PC-9 (cell line): ENCODE measurements at regions of chr2 and their contacts with region 1.

Region 1: DNA sequence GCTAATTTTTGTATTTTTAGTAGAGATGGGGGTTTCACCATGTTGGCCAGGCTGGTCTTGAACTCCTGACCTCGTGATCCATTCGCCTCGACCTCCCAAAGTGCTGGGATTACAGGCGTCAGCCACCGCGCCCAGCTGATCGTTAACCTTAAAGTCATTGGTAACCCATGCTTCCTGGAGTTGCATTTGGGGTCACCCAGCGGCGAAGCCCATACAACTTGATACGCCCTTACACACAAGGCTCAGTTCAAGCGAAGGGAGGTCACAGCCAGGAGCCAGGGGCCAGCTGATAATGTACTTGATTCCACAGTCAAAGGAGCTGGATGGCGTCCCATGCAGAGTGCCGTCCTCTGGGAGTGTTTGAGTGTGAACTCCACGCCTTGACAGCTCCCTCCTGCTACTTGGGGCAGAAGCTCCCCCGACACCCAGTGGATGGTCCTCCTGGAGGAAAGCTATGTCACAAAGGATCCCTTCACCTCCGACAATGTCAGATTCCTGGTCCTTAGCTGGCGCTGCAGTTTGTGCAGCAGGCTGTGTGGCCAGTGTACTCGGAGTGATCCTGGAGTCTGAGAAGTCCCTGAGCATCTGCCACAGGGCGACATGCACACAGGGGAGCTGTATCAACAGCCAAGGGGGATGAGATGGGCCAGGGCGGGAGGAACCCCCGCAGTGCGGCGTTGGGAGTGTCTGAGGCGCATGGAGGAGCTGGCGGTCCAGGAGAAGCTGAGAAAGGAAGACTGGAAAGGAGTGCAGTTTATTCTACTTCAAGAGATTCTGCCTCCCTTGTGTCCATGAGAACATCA is 7.9 kb downstream of the CLHC1 start:
- DNase-seq: no peak
- H3K4me3 ChIP-seq: peak overlapping the region; percentile 53; the same call in 1 of the 2 replicates
- H3K27ac ChIP-seq: no peak overlapping the region
- H3K4me1 ChIP-seq: 0 out of 2 replicates have a peak, but pooled peaks cover 5% of the 10 kb centered on the region
- H3K27me3 ChIP-seq: no peaks in the 10 kb centered on the region
- CTCF ChIP-seq: no peak

Region 2: DNA sequence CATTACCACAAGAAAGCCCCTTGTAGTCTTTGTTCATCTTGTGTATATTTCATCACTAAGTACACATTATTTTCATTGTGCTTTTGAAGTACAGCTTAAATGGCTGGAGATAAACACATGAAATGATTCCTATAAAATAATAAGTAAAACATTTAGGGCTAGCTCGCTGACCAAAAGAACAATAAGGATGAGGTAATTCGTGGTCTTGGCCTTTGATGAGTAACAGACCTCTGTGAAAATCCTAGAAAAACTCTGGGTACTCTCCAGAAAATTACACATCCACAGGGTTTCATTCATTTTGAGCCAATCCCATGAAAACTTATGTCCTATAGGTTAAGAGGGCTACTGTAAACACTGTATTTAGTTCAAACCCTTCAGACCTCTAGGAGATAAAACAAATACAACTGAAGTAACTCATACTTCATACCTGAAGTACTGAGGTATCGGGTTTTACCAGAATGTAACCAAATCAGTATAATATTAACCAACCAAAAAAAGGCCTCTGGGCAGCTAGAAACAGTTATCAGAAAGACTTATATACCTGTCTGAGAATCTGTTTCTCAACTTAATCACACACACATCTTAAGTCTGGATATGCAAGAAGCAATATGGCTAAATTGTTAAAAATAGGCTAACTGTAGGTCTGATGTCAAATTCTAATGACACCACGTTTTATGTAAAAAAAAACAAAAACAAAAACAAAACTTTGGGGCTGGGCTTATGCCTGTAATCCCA is 326.4 kb after region 1 on chr2:
- CTCF ChIA-PET with region 1: interaction called, 19 read pairs
- POLR2A ChIA-PET with region 1: no interaction called
- intact Hi-C with region 1: no loop called
- DNase-seq: peak in 1 of 2 experiments; percentile 33
- H3K4me3 ChIP-seq: no peak overlapping the region
- H3K27ac ChIP-seq: no peak overlapping the region
- H3K4me1 ChIP-seq: peaks cover 3% of the 10 kb centered on the region
- H3K27me3 ChIP-seq: no peaks in the 10 kb centered on the region
- CTCF ChIP-seq: no peak

Region 3: GRCh38 chr2:55575591-55575990 is 351.4 kb after region 1 on chr2:
- CTCF ChIA-PET with region 1: no interaction called
- POLR2A ChIA-PET with region 1: interaction called, 23 read pairs
- intact Hi-C with region 1: no loop called
- DNase-seq: no peak
- H3K4me3 ChIP-seq: no peak overlapping the region
- H3K27ac ChIP-seq: no peak overlapping the region
- H3K4me1 ChIP-seq: no peaks in the 10 kb centered on the region
- H3K27me3 ChIP-seq: no peaks in the 10 kb centered on the region
- CTCF ChIP-seq: no peak